ENCODE measurements at regions of chr3 and their contacts with region 1.

Region 1: DNA sequence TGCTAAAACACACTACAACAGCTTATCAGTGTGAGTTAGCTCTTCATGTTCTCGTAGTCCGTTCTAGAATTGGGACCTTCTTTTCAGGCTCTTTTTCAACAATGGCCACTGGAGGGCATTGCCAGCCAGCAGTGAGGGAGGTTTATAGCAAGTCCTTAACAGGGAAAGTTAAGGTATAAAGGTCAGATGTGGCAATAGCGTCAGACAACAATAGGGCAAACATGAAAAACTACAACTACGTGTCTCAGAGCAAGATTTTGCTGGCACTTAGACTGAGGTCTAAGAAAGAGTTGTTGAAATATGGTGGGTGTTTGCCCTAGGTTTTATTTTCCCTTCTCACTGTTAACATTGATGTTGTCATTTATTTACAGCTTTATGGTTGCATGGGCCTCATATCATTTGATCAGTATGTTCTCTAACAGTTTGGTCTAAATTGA is 161.4 kb downstream of the GMNC start:
- DNase-seq: peak; percentile 69 to 73
- H3K4me3 ChIP-seq: no peak overlapping the region
- H3K4me3 Mint-ChIP-seq: no peak overlapping the region
- H3K27ac Mint-ChIP-seq: no peak overlapping the region
- H3K4me1 ChIP-seq: peaks cover 5% of the 10 kb centered on the region; the same call in 1 of the 2 replicates
- H3K4me1 Mint-ChIP-seq: no peaks in the 10 kb centered on the region
- H3K27me3 ChIP-seq: no peaks in the 10 kb centered on the region
- H3K27me3 Mint-ChIP-seq: peaks cover 5% of the 10 kb centered on the region
- CTCF ChIP-seq: peak; percentile 55 to 75

Region 2: DNA sequence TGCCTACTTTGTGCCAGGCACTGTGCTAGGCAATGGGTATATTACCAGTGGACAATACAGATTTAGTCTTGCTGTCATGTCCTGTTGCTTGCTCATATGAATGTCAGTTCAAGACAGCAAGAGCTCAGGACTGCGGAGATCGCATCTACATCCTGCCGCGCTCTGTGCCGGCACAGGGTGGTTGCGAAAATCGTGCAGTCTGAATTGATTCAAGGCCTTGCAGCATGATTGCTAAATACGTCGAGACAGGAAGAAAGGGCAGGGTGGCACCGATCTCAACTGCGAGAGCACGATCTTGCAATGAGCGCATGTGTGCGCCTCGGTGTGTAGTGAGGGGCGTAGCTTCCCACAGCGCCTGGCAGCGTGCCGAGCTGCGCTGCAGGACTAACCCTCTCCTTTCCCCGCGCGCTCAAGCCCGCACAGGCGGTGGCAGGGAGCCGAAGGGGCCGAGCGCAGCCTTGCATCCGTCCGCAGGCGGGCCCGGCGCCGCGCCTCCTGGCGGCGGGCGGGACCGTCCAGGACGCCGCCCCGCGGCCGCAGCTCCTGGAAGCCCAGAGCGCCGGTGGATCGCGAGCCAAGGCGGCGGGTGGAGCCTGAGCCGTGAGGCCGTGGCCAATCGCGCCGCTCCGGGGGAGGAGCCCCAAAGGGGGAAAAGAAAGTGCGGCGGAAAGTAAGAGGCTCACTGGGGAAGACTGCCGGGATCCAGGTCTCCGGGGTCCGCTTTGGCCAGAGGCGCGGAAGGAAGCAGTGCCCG is 187.5 kb before region 1 on chr3 and contains the start of gene IL1RAP:
- CTCF ChIA-PET with region 1: interaction called, 7 read pairs
- POLR2A ChIA-PET with region 1: no interaction called
- intact Hi-C with region 1: loop called (anchors 2 kb)
- DNase-seq: peak; percentile 86 to 91
- H3K4me3 ChIP-seq: peak within 1 kb of the TSS; percentile 63
- H3K4me3 Mint-ChIP-seq: peak within 1 kb of the TSS; percentile 94
- H3K27ac Mint-ChIP-seq: peak within 1 kb of the TSS; percentile 69
- H3K4me1 ChIP-seq: no peaks in the 10 kb centered on the region
- H3K4me1 Mint-ChIP-seq: peaks cover 10% of the 10 kb centered on the region
- H3K27me3 ChIP-seq: no peaks in the 10 kb centered on the region
- H3K27me3 Mint-ChIP-seq: peaks cover 9% of the 10 kb centered on the region
- CTCF ChIP-seq: peak; percentile 36 to 63
- total RNA-seq, gene IL1RAP: 5.1 and 6.2 TPM in 2 replicates

Region 3: GRCh38 chr3:190862209-190863118 is 161.3 kb after region 1 on chr3 and contains the start of gene GMNC:
- CTCF ChIA-PET with region 1: interaction called, 3 read pairs
- POLR2A ChIA-PET with region 1: no interaction called
- intact Hi-C with region 1: loop called (anchors 5 kb)
- DNase-seq: peak; percentile 62 to 73
- H3K4me3 ChIP-seq: peak within 1 kb of the TSS; percentile 46
- H3K4me3 Mint-ChIP-seq: peak within 1 kb of the TSS; percentile 75
- H3K27ac Mint-ChIP-seq: no peak within 1 kb of the TSS
- H3K4me1 ChIP-seq: peaks cover 7% of the 10 kb centered on the region; the same call in 1 of the 2 replicates
- H3K4me1 Mint-ChIP-seq: peaks cover 15% of the 10 kb centered on the region
- H3K27me3 ChIP-seq: no peaks in the 10 kb centered on the region
- H3K27me3 Mint-ChIP-seq: peaks cover 23% of the 10 kb centered on the region
- CTCF ChIP-seq: no peak
- total RNA-seq, gene GMNC: not detected in 2 replicates

Region 4: DNA sequence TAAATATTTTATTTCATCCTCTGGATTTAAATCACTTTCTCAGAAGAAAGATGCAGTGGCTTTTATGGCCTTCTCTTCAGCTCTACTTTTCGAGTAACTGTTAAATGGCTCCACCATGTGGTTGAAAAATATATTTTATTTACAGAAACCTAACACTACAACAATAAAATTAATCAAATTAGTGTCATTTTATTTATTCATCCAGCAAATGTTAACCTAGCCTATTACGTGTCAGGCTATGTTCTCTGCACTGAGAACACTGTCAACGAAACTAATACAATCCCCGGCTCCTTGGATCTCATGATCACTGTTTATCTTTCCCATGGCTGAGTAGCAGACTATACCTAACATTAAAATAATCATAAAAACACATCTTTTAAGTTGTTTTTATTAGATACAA is 349.9 kb after region 1 on chr3:
- CTCF ChIA-PET with region 1: interaction called, 7 read pairs
- POLR2A ChIA-PET with region 1: no interaction called
- intact Hi-C with region 1: loop called (anchors 1 kb)
- DNase-seq: peak in 1 of 2 experiments; percentile 10
- H3K4me3 ChIP-seq: no peak overlapping the region
- H3K4me3 Mint-ChIP-seq: no peak overlapping the region
- H3K27ac Mint-ChIP-seq: no peak overlapping the region
- H3K4me1 ChIP-seq: no peaks in the 10 kb centered on the region
- H3K4me1 Mint-ChIP-seq: no peaks in the 10 kb centered on the region
- H3K27me3 ChIP-seq: no peaks in the 10 kb centered on the region
- H3K27me3 Mint-ChIP-seq: peaks cover 3% of the 10 kb centered on the region
- CTCF ChIP-seq: peak; percentile 13 to 32